ENCODE measurements at regions of chr1 and their contacts with region 1.

Region 1: DNA sequence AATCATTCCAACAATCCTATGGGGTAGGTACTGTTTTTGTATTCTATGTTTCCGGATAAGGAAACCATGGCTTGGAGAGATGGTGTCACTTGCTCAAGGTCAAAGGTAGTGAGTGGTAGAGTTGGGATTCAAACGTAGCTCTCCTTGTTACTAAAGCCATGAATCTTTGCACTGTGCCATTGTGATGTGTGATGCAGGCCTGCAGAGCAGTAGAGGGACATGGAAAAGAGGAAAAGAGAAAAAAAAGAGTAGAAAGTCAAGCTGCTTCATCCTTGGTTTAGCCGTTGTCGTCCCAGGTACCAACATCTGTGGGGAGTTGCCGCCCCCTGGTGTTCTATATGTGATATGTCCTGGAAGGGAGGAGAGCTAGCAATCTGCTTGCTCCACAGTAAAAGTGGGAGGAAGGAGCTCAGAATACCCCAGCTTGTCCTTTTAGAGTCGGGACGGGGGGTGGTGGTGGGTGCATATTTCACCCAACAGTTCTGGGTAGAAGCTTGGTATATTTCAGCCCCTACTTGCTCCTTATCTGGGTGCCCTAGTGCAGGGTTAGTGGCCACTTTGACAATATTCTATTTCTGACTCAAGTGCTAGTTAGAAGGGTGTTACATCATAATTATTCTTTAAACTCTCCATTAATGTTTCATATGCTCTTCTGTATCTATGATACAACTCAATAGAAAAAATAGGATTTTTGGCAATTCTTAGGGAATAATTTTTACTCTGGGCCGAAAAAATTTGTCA is 98.4 kb downstream of the EBNA1BP2 start:
- DNase-seq: peak; percentile 64
- H3K4me3 ChIP-seq: no peak overlapping the region
- H3K27ac ChIP-seq: no peak overlapping the region
- H3K4me1 ChIP-seq: peaks cover 4% of the 10 kb centered on the region
- H3K27me3 ChIP-seq: no peaks in the 10 kb centered on the region
- CTCF ChIP-seq: peak; percentile 76 to 80

Region 2: GRCh38 chr1:42784946-42785693 is 288.5 kb before region 1 on chr1 and contains the start of gene TMEM269:
- CTCF ChIA-PET with region 1: no interaction called
- dilution Hi-C with region 1: no loop called
- in situ Hi-C with region 1: loop called in 1 of 2 experiments (anchors 10 kb)
- intact Hi-C with region 1: no loop called
- DNase-seq: no peak
- H3K4me3 ChIP-seq: peak within 1 kb of the TSS in 1 of 3 experiments; percentile 21
- H3K27ac ChIP-seq: no peak within 1 kb of the TSS
- H3K4me1 ChIP-seq: peaks cover 5% of the 10 kb centered on the region
- H3K27me3 ChIP-seq: no peaks in the 10 kb centered on the region
- CTCF ChIP-seq: no peak
- total RNA-seq, gene TMEM269: 0.16 TPM in 1 of 2 donors, not detected in the other

Region 3: GRCh38 chr1:42801832-42802473 is 271.7 kb before region 1 on chr1:
- CTCF ChIA-PET with region 1: no interaction called
- dilution Hi-C with region 1: no loop called
- in situ Hi-C with region 1: no loop called
- intact Hi-C with region 1: no loop called
- DNase-seq: no peak
- H3K4me3 ChIP-seq: no peak overlapping the region
- H3K27ac ChIP-seq: no peak overlapping the region
- H3K4me1 ChIP-seq: no peaks in the 10 kb centered on the region
- H3K27me3 ChIP-seq: peaks cover 3% of the 10 kb centered on the region
- CTCF ChIP-seq: no peak

Region 4: GRCh38 chr1:42924082-42924850 is 149.4 kb before region 1 on chr1:
- CTCF ChIA-PET with region 1: interaction called, 34 read pairs
- dilution Hi-C with region 1: loop called (anchors 10 kb)
- in situ Hi-C with region 1: loop called (anchors 5 kb)
- intact Hi-C with region 1: loop called (anchors 1 kb)
- DNase-seq: peak; percentile 77
- H3K4me3 ChIP-seq: peak overlapping the region; percentile 28 to 46 (median 35)
- H3K27ac ChIP-seq: no peak overlapping the region
- H3K4me1 ChIP-seq: peaks cover 36% of the 10 kb centered on the region
- H3K27me3 ChIP-seq: no peaks in the 10 kb centered on the region
- CTCF ChIP-seq: peak in 1 of 2 donors; percentile 30

Region 5: GRCh38 chr1:42958488-42959319 is 115.0 kb before region 1 on chr1 and contains the start of gene SLC2A1:
- CTCF ChIA-PET with region 1: interaction called, 3 read pairs
- dilution Hi-C with region 1: no loop called
- in situ Hi-C with region 1: loop called in 1 of 2 experiments (anchors 5 kb)
- intact Hi-C with region 1: loop called (anchors 1 kb)
- DNase-seq: peak; percentile 96
- H3K4me3 ChIP-seq: peak within 1 kb of the TSS; percentile 69 to 87 (median 83)
- H3K27ac ChIP-seq: peak within 1 kb of the TSS; percentile 82
- H3K4me1 ChIP-seq: peaks cover 45% of the 10 kb centered on the region
- H3K27me3 ChIP-seq: no peaks in the 10 kb centered on the region
- CTCF ChIP-seq: no peak
- total RNA-seq, gene SLC2A1: 471 to 738 TPM

Region 6: DNA sequence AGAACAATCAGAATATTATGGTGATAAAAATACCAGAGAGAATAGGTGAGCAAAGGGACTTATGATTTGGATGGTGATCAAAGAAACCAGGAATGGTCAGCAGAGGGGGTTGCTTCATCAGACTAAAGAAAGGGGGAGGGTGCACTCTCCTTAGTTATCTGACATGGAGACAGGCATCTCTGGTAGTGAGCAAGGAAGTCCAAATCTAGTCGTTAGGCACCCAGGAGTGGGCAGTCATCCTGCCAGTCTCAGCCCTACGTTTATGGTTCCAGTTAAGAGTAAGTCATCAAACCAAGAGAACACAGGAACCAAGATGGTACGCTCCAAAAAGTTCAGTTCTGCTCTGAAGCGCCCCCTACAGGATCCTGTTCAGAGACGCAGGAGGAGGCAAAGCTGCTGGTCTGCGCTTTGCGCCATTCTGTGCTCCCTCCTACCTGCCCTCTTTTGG is 69.8 kb after region 1 on chr1:
- CTCF ChIA-PET with region 1: no interaction called
- dilution Hi-C with region 1: no loop called
- in situ Hi-C with region 1: no loop called
- intact Hi-C with region 1: no loop called
- DNase-seq: peak; percentile 11
- H3K4me3 ChIP-seq: no peak overlapping the region
- H3K27ac ChIP-seq: no peak overlapping the region
- H3K4me1 ChIP-seq: peaks cover 19% of the 10 kb centered on the region
- H3K27me3 ChIP-seq: no peaks in the 10 kb centered on the region
- CTCF ChIP-seq: peak in 1 of 2 donors; percentile 37

Region 7: GRCh38 chr1:43171876-43172526 is 98.3 kb after region 1 on chr1 and contains the starts of genes CFAP57 and EBNA1BP2:
- CTCF ChIA-PET with region 1: interaction called, 6 read pairs
- dilution Hi-C with region 1: no loop called
- in situ Hi-C with region 1: no loop called
- intact Hi-C with region 1: loop called (anchors 1 kb)
- DNase-seq: peak; percentile 92
- H3K4me3 ChIP-seq: peak within 1 kb of the TSS; percentile 56 to 100 (median 94)
- H3K27ac ChIP-seq: peak within 1 kb of the TSS; percentile 55
- H3K4me1 ChIP-seq: peaks cover 11% of the 10 kb centered on the region
- H3K27me3 ChIP-seq: no peaks in the 10 kb centered on the region
- CTCF ChIP-seq: no peak
- total RNA-seq, gene CFAP57: 0.26 to 0.50 TPM
- total RNA-seq, gene EBNA1BP2: 56.5 to 115 TPM

Measured in mammary epithelial cell (primary cell).